Ascending aorta (tissue), 2 donors: ENCODE measurements at regions of chr10 and their contacts with region 1.

Region 1: GRCh38 chr10:17643755-17644484 is at the start of gene STAM:
- DNase-seq: peak; percentile 72 to 93
- H3K4me3 ChIP-seq: peak within 1 kb of the TSS; percentile 86 to 93
- H3K27ac ChIP-seq: peak within 1 kb of the TSS; percentile 95 to 98
- H3K4me1 ChIP-seq: peaks cover 3 to 29% of the 10 kb centered on the region in 2 donors
- H3K27me3 ChIP-seq: no peaks in the 10 kb centered on the region
- CTCF ChIP-seq: no peak
- total RNA-seq, gene STAM: 1.5 TPM

Region 2: DNA sequence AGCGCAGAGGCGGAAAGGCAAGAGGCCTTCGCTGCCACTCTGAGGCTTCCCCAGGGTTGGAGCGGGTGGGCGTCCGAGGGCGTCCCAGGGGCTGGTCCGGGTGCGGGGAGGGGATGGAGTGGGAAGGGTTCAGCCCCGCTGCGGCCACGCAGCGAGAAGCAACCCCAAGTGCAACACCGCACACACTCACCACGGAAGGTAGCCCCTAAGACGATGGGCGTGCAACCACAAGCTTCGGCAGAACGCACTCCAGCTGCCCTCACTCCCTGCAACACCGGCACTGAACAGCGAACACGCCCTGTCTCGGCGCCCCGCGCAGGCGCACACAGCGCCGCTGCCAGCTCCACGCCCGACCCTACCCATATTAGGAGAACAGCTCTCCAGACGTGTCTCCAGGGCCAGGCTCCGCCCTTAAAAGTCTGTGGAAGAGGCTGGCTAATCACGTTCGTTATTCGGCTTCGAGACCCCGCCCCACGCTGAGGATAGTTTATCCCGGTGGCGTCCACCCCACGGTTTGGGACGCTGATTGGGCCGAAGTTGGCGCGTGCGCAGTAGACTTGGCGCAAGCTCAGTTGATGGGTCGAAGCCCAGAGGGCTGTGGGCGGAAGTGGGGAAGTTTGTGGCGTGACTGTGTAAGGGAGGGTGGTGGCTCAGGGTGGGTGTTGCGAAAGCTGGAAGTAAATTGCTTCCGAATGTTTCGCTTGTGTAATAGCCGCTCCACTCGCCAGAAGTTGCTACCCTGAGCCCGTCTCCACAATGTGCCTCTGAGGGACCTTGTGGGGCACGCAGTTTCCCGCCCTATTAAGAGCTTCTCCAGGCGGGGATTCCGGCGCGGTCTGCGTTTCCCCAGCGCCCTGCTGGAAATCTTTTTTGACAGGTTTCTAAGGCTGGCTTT is 826.5 kb before region 1 on chr10 and contains the start of gene RSU1:
- intact Hi-C with region 1: loop called (anchors 5 kb)
- DNase-seq: peak; percentile 100
- H3K4me3 ChIP-seq: peak within 1 kb of the TSS; percentile 61 to 88
- H3K27ac ChIP-seq: peak within 1 kb of the TSS; percentile 91 to 95
- H3K4me1 ChIP-seq: peaks cover 0 to 29% of the 10 kb centered on the region in 2 donors
- H3K27me3 ChIP-seq: no peaks in the 10 kb centered on the region
- CTCF ChIP-seq: no peak
- total RNA-seq, gene RSU1: 82.2 TPM

Region 3: GRCh38 chr10:17607603-17608332 is 36.2 kb before region 1 on chr10:
- intact Hi-C with region 1: loop called (anchors 5 kb)
- DNase-seq: no peak
- H3K4me3 ChIP-seq: no peak overlapping the region
- H3K27ac ChIP-seq: no peak overlapping the region
- H3K4me1 ChIP-seq: no peaks in the 10 kb centered on the region
- H3K27me3 ChIP-seq: no peaks in the 10 kb centered on the region
- CTCF ChIP-seq: peak; percentile 66 to 85 (median 80)

Region 4: DNA sequence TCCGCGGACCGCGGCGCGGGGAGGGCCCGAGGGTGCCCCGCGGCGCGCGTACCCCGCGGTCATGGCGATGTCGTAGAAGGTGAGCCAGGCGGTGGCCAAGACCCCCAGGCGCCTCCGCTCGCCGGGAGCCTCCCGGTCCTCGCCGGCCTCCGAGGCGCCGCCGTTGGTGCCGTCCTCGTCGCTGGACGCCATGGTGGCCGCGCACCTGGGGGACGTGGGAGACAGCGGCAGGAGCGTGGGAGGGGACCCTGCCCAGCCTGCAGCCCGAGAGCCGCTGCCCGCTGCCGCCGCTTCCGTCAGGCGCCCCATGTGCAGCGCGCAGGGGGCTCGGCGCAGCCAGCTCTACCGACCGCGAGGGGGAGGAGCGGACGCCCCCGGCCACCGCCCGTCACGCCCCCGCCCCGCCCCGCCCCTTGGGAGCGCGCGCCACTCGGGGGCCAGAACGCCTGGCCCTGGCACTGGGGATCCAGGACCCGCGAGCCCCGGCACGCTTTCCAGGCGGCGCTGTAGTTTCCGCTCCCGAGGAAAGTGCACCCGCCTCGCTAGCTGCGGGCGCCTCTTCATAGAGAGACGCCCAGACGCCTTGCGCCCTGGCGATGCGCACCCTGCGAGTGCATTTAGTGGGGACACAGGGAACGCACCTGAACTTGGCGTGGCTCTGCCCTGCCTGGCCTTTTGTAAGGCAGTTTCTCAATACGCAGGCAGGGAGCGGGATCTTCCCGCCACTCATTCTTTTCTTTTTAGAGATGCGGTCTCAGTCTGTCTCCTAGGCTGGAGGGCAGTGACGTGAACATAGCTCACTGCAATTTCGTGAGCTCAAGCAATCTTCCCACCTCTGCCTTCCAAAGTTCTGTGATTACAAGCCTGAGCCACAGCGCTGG is 26.6 kb before region 1 on chr10 and contains the start of gene HACD1:
- intact Hi-C with region 1: loop called (anchors 1 kb)
- DNase-seq: peak in 1 of 2 donors; percentile 86
- H3K4me3 ChIP-seq: peak within 1 kb of the TSS; percentile 73 to 75
- H3K27ac ChIP-seq: peak within 1 kb of the TSS; percentile 90 to 95
- H3K4me1 ChIP-seq: peaks cover 0 to 15% of the 10 kb centered on the region in 2 donors
- H3K27me3 ChIP-seq: no peaks in the 10 kb centered on the region
- CTCF ChIP-seq: peak in 1 of 3 experiments; percentile 29
- total RNA-seq, gene HACD1: 41.6 TPM

Region 5: GRCh38 chr10:17665747-17666146 is 21.8 kb after region 1 on chr10:
- intact Hi-C with region 1: loop called (anchors 1 kb)
- DNase-seq: no peak
- H3K4me3 ChIP-seq: peak overlapping the region in 1 of 2 donors; percentile 36
- H3K27ac ChIP-seq: peak overlapping the region; percentile 50 to 79
- H3K4me1 ChIP-seq: peaks cover 4 to 9% of the 10 kb centered on the region in 2 donors
- H3K27me3 ChIP-seq: no peaks in the 10 kb centered on the region
- CTCF ChIP-seq: no peak

Region 6: DNA sequence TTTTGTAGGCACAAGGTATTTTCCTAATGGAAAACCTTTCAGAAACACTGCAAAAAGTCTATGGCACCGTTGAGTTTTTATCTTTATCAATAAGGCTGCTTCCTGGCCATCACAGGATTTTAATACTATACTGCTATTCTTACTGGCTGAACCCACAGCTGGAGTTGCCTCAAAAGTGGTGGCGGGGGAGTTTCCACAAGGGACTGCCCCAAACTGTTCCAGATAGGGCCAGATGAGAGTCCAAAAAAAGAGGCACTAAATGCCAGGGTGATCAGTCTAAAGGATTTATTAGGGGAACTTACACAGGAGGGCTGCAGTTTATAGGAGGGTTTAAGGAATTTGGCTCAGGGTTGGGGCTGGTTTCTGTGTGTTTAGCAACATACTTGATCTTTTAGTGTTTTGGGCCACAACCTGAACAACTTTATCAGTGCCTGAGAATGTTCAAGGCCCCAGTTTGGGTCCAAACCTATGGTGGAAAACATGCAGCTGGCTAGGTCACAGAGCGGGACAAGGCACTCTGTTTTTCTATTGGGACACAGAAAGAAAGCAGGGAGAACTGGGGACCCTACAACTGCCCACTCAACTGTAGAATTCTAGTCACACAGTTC is 41.4 kb after region 1 on chr10:
- intact Hi-C with region 1: no loop called
- DNase-seq: no peak
- H3K4me3 ChIP-seq: no peak overlapping the region
- H3K27ac ChIP-seq: no peak overlapping the region
- H3K4me1 ChIP-seq: no peaks in the 10 kb centered on the region
- H3K27me3 ChIP-seq: no peaks in the 10 kb centered on the region
- CTCF ChIP-seq: no peak

Region 7: DNA sequence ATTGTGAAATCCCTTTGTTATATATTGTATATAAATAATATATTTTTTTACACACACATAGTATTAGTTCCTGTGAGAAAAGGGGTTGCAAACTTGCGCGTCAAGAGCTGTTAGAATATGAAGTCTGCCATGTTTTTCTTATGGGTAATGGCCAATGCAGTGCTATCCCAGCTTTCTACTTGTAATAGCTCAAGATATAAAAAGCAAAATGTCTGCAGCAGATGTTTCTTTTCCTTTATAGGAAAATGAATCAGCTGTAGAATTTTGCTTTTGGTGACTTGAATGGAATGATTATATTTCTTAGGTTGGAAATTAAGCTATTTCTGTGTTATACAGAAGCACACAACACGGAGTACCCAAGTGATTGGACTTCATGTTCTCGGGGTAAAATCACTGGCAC is 54.8 kb after region 1 on chr10:
- intact Hi-C with region 1: no loop called
- DNase-seq: no peak
- H3K4me3 ChIP-seq: no peak overlapping the region
- H3K27ac ChIP-seq: no peak overlapping the region
- H3K4me1 ChIP-seq: no peaks in the 10 kb centered on the region
- H3K27me3 ChIP-seq: no peaks in the 10 kb centered on the region
- CTCF ChIP-seq: no peak

Region 8: GRCh38 chr10:18097524-18097923 is 453.6 kb after region 1 on chr10:
- intact Hi-C with region 1: no loop called
- DNase-seq: no peak
- H3K4me3 ChIP-seq: no peak overlapping the region
- H3K27ac ChIP-seq: no peak overlapping the region
- H3K4me1 ChIP-seq: no peaks in the 10 kb centered on the region
- H3K27me3 ChIP-seq: no peaks in the 10 kb centered on the region
- CTCF ChIP-seq: no peak